B cell (primary cell): ENCODE measurements at regions of chr9 and their contacts with region 1.

Region 1: DNA sequence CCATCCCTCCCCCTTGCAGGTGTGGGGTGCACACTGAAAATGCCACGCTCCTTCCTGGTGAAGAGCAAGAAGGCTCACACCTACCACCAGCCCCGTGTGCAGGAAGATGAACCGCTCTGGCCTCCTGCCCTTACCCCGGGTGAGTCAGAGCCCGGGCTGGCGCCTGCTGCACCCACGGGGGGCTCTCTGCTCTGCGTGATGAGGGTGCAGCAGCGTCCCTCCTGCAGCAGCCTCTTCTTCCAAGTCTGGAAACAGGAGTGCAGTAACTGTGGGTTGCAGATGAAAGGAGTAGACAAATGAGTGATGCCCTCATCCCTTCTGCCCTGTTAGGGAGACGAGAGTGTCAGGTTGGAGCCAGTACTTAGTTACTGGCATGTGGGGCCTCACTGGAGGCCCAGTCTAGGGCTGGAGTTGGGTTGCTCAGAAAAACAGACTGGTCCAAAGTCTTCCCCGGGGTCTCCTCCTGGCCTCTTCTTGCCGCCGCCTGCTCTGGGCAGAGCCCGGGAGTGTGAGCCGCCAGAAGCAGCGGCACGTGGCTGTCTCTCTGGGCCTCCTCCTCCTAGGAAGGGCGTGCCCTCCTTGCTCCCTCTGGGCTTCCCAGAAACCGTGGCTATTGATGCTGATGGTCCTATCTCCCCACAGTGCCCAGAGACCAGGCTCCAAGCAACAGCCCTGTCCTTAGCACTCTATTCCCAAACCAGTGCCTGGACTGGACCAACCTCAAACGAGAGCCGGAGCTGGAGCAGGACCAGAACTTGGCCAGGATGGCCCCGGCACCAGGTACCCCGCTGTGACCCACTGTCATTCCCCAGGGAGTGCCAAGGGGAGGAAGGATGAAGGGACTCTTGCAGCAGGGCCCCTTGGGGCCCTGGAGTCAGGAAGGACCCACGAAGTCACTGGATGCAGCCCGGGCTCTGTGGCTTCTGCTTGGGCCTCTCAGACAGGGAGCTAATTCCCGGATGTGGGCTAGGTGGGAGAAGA is 8.4 kb downstream of the GFI1B start:
- DNase-seq: no peak
- ATAC-seq: no peak
- H3K4me3 ChIP-seq: no peak overlapping the region
- H3K4me3 Mint-ChIP-seq: no peak overlapping the region
- H3K27ac ChIP-seq: no peak overlapping the region
- H3K27ac Mint-ChIP-seq: no peak overlapping the region
- H3K4me1 ChIP-seq: peaks cover 8 to 9% of the 10 kb centered on the region in 2 donors
- H3K4me1 Mint-ChIP-seq: peaks cover 9% of the 10 kb centered on the region
- H3K27me3 ChIP-seq: peaks cover 0 to 41% (median 4%) of the 10 kb centered on the region in 4 experiments
- H3K27me3 Mint-ChIP-seq: peaks cover 40% of the 10 kb centered on the region
- CTCF ChIP-seq: no peak

Region 2: DNA sequence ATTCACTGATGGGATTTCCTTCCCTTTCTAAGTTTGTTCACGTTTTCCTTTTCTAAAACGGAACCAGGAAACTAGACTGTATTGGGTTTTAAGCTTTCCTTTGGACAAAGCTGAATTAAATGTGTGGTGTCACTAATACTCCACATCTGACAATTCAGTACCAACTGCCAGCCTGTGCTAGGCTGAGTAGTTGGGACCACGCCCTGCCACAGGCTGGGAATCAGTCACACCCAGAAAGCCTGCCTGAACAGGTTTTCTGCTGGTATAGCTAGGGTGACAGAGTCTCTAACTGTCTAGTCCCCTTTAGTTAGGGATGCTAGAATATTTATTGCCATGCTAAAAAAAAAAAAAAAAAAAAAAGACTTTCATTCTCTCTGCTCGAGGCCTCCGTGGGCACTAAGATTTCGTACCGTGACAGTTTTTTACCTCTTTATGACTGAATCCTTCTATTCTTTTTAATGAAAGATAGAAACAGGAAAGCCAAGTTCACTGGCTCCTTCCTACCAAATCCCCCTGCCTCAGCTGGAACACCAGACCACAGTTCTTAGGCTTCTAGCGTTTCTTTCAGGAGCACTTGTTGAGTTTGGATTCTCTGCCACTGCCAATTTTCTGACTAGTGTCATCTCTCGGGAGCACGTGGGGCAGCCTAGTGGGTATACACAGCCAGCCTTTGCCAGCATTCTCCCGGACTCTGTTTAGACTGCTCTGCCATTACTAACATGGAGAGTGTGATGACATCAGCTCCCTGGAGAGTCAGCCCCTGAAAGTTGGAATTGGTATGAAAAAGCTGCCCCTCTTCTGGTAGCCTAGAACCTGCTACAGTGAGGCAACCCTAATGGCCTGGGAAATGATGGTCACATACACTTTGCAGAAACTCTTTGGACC is 92.3 kb before region 1 on chr9:
- CTCF ChIA-PET with region 1: no interaction called
- POLR2A ChIA-PET with region 1: interaction called, 13 read pairs
- intact Hi-C with region 1: no loop called
- DNase-seq: no peak
- ATAC-seq: no peak
- H3K4me3 ChIP-seq: no peak overlapping the region
- H3K4me3 Mint-ChIP-seq: no peak overlapping the region
- H3K27ac ChIP-seq: no peak overlapping the region
- H3K27ac Mint-ChIP-seq: no peak overlapping the region
- H3K4me1 ChIP-seq: peaks cover 3 to 6% of the 10 kb centered on the region in 2 donors
- H3K4me1 Mint-ChIP-seq: peaks cover 13% of the 10 kb centered on the region
- H3K27me3 ChIP-seq: no peaks in the 10 kb centered on the region
- H3K27me3 Mint-ChIP-seq: no peaks in the 10 kb centered on the region
- CTCF ChIP-seq: no peak